T-cell (primary cell): ENCODE measurements at regions of chr15 and their contacts with region 1.

Region 1: GRCh38 chr15:56496635-56497034 is 31.7 kb upstream of the MNS1 start:
- DNase-seq: peak in 2 of 35 experiments; percentile 12 to 66
- ATAC-seq: peak in 3 of 4 experiments; percentile 44 to 55 (median 45)
- H3K4me3 ChIP-seq: no peak overlapping the region
- H3K4me3 Mint-ChIP-seq: no peak overlapping the region
- H3K27ac ChIP-seq: no peak overlapping the region
- H3K27ac Mint-ChIP-seq: no peak overlapping the region
- H3K4me1 ChIP-seq: no peaks in the 10 kb centered on the region
- H3K4me1 Mint-ChIP-seq: peaks cover 0 to 3% (median 2%) of the 10 kb centered on the region in 3 donors
- H3K27me3 ChIP-seq: peaks cover 0 to 7% of the 10 kb centered on the region in 2 experiments
- H3K27me3 Mint-ChIP-seq: peaks cover 3 to 15% of the 10 kb centered on the region in 2 donors

Region 2: DNA sequence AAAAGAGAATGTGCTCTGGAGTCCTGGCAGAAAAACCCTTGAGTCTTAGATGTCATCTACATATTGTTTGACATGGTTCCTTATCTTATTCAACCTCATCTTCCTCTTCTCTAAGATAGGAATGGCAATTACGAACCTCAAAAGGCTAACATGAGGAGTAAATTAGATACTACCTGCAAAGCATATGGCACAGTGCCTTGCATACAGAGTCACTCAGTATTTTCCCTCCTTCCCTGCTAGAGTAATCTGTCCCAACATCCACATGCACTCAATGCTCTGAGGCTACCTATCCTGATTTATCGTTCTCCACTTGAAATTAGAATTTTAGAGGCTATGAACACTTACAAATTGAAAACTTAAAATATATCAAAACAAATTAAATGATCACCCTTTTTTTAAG is 1686.6 kb before region 1 on chr15:
- CTCF ChIA-PET with region 1: no interaction called
- POLR2A ChIA-PET with region 1: no interaction called
- DNase-seq: no peak
- ATAC-seq: no peak
- H3K4me3 ChIP-seq: no peak overlapping the region
- H3K4me3 Mint-ChIP-seq: no peak overlapping the region
- H3K27ac ChIP-seq: no peak overlapping the region
- H3K27ac Mint-ChIP-seq: no peak overlapping the region
- H3K4me1 ChIP-seq: no peaks in the 10 kb centered on the region
- H3K4me1 Mint-ChIP-seq: no peaks in the 10 kb centered on the region
- H3K27me3 ChIP-seq: no peaks in the 10 kb centered on the region
- H3K27me3 Mint-ChIP-seq: peaks cover 0 to 12% of the 10 kb centered on the region in 2 donors

Region 3: DNA sequence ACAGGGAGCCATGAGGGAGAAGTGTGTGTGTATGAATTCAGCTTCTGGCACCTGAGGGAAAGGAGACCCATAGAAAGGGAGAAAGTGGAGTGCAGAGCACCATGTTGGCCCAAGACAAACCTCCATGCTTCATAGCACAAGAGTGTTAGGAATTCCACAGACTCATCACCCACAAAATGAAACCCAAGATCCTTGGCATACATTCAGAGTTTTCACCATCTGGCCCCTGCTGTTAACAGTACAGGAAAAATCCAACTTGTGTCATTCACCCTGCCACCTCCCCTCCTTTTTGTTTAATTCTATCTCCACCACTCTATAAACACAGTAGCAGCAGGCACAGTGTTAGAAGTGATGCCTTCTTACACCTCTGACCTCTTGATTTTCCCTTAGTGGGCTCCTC is 28.3 kb after region 1 on chr15:
- CTCF ChIA-PET with region 1: no interaction called
- POLR2A ChIA-PET with region 1: no interaction called
- DNase-seq: no peak
- ATAC-seq: no peak
- H3K4me3 ChIP-seq: no peak overlapping the region
- H3K4me3 Mint-ChIP-seq: no peak overlapping the region
- H3K27ac ChIP-seq: no peak overlapping the region
- H3K27ac Mint-ChIP-seq: no peak overlapping the region
- H3K4me1 ChIP-seq: no peaks in the 10 kb centered on the region
- H3K4me1 Mint-ChIP-seq: no peaks in the 10 kb centered on the region
- H3K27me3 ChIP-seq: peaks cover 0 to 3% of the 10 kb centered on the region in 2 experiments
- H3K27me3 Mint-ChIP-seq: peaks cover 7 to 14% of the 10 kb centered on the region in 2 donors

Region 4: DNA sequence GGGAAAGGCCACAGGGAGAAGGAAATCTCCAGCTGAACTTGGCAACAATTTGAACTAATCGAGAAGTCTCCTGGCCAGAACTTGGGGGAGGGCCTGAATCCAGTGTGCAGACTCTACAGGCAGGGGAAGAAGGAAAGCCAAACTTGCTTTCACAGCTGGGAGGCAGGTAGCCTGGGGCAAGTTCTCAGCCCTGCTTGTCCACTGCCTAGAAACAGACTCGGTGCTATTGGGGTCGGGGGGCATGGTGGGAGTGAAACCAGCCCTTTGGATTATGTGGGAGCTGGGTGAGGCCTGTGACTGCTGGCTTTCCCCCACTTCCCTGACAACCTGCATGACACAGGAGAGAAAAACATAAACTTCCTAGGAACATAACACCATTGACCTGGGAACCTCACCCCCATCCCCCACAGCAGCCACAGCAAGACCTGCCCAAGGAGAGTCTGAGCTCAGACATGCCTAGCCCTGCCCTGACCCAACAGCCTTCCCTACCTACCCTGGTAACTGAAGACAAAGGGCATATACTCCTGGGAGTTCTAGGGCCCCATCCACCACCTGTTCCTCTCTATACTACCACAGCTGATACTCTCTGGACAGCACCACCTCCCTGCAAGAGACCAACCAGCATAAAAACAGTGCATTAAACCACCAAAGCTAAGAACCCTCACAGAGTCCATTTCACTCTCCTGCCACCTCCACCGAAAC is 72.0 kb after region 1 on chr15:
- CTCF ChIA-PET with region 1: no interaction called
- POLR2A ChIA-PET with region 1: no interaction called
- DNase-seq: no peak
- ATAC-seq: no peak
- H3K4me3 ChIP-seq: no peak overlapping the region
- H3K4me3 Mint-ChIP-seq: no peak overlapping the region
- H3K27ac ChIP-seq: no peak overlapping the region
- H3K27ac Mint-ChIP-seq: no peak overlapping the region
- H3K4me1 ChIP-seq: no peaks in the 10 kb centered on the region
- H3K4me1 Mint-ChIP-seq: no peaks in the 10 kb centered on the region
- H3K27me3 ChIP-seq: peaks cover 0 to 4% of the 10 kb centered on the region in 2 experiments
- H3K27me3 Mint-ChIP-seq: peaks cover 1 to 9% of the 10 kb centered on the region in 2 donors

Region 5: GRCh38 chr15:57306161-57306943 is 809.7 kb after region 1 on chr15:
- CTCF ChIA-PET with region 1: interaction called, 9 to 13 read pairs
- POLR2A ChIA-PET with region 1: no interaction called
- DNase-seq: peak; percentile 38 to 87 (median 74)
- ATAC-seq: peak; percentile 75 to 83 (median 80)
- H3K4me3 ChIP-seq: peak overlapping the region; percentile 40 to 92
- H3K4me3 Mint-ChIP-seq: peak overlapping the region; percentile 47 to 64 (median 51)
- H3K27ac ChIP-seq: no peak overlapping the region
- H3K27ac Mint-ChIP-seq: peak overlapping the region in 1 of 2 donors; percentile 46
- H3K4me1 ChIP-seq: peaks cover 0 to 12% of the 10 kb centered on the region in 2 experiments
- H3K4me1 Mint-ChIP-seq: peaks cover 5 to 12% (median 6%) of the 10 kb centered on the region in 3 donors
- H3K27me3 ChIP-seq: peaks cover 0 to 27% of the 10 kb centered on the region in 2 experiments
- H3K27me3 Mint-ChIP-seq: peaks cover 3 to 14% of the 10 kb centered on the region in 2 donors